PC-9 (cell line): ENCODE measurements at regions of chr5 and their contacts with region 1.

Region 1: GRCh38 chr5:150350524-150351344 is 6.8 kb upstream of the TCOF1 start:
- DNase-seq: peak; percentile 66 to 82
- H3K4me3 ChIP-seq: no peak overlapping the region
- H3K27ac ChIP-seq: no peak overlapping the region
- H3K4me1 ChIP-seq: peaks cover 6% of the 10 kb centered on the region
- H3K27me3 ChIP-seq: no peaks in the 10 kb centered on the region
- CTCF ChIP-seq: peak; percentile 90

Region 2: GRCh38 chr5:150129813-150130492 is 220.8 kb before region 1 on chr5:
- CTCF ChIA-PET with region 1: no interaction called
- POLR2A ChIA-PET with region 1: interaction called, 3 read pairs
- intact Hi-C with region 1: loop called (anchors 1 kb)
- DNase-seq: peak; percentile 50 to 72
- H3K4me3 ChIP-seq: peak overlapping the region; percentile 42; the same call in 1 of the 2 replicates
- H3K27ac ChIP-seq: no peak overlapping the region
- H3K4me1 ChIP-seq: no peaks in the 10 kb centered on the region
- H3K27me3 ChIP-seq: no peaks in the 10 kb centered on the region; the same call in 1 of the 2 replicates
- CTCF ChIP-seq: peak; percentile 94

Region 3: GRCh38 chr5:150217873-150218692 is 132.7 kb before region 1 on chr5:
- CTCF ChIA-PET with region 1: interaction called, 4 read pairs
- POLR2A ChIA-PET with region 1: no interaction called
- intact Hi-C with region 1: loop called (anchors 1 kb)
- DNase-seq: peak; percentile 51 to 84
- H3K4me3 ChIP-seq: no peak overlapping the region
- H3K27ac ChIP-seq: no peak overlapping the region
- H3K4me1 ChIP-seq: 0 out of 2 replicates have a peak, but pooled peaks cover 7% of the 10 kb centered on the region
- H3K27me3 ChIP-seq: no peaks in the 10 kb centered on the region
- CTCF ChIP-seq: peak; percentile 96

Region 4: GRCh38 chr5:150302301-150303069 is 48.2 kb before region 1 on chr5 and contains the start of gene ARSI:
- CTCF ChIA-PET with region 1: interaction called, 11 read pairs
- POLR2A ChIA-PET with region 1: interaction called, 4 read pairs
- intact Hi-C with region 1: loop called (anchors 5 kb)
- DNase-seq: peak in 1 of 2 experiments; percentile 56
- H3K4me3 ChIP-seq: peak within 1 kb of the TSS; percentile 40; the same call in 1 of the 2 replicates
- H3K27ac ChIP-seq: no peak within 1 kb of the TSS
- H3K4me1 ChIP-seq: peaks cover 15% of the 10 kb centered on the region
- H3K27me3 ChIP-seq: no peaks in the 10 kb centered on the region
- CTCF ChIP-seq: no peak
- total RNA-seq, gene ARSI: 2.6 and 3.2 TPM in 2 replicates

Region 5: GRCh38 chr5:150517272-150518152 is 166.8 kb after region 1 on chr5:
- CTCF ChIA-PET with region 1: no interaction called
- POLR2A ChIA-PET with region 1: no interaction called
- intact Hi-C with region 1: no loop called
- DNase-seq: peak; percentile 96 to 100
- H3K4me3 ChIP-seq: no peak overlapping the region
- H3K27ac ChIP-seq: peak overlapping the region; percentile 72
- H3K4me1 ChIP-seq: peaks cover 45% of the 10 kb centered on the region
- H3K27me3 ChIP-seq: no peaks in the 10 kb centered on the region
- CTCF ChIP-seq: no peak